Dendritic cell treated with granulocyte-macrophage colony-stimulating factor and Interleukin-4, amounts not matched to agents 40 ng/mL and 50 ng/mL, for 4 days (primary cell): ENCODE measurements at regions of chr17 and their contacts with region 1.

Region 1: DNA sequence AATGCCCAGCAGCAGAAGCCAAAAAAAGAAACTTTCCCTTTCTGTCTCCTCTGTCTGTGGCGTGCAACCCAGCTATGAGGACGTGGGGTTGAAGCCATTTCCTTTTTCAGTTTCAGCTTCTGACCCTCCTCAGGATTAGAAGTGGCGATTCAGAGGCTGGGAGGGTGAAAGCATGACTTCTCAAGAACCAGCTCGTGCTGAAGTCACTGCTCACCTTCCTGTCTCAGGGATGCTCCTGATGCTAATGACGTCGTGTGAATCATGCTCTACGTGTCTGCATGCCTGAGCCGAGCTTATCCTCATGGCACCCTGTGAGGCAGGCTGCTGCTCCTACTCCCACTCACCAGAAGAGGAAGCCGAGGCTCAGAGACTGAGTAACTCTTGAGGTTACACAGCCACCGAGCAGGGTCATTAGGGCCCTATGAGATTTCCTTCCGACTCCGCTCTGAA is 5.7 kb upstream of the LPO start:
- H3K4me3 Mint-ChIP-seq: peak overlapping the region; percentile 53
- H3K27ac Mint-ChIP-seq: peak overlapping the region; percentile 85
- H3K4me1 Mint-ChIP-seq: peaks cover 47% of the 10 kb centered on the region
- H3K27me3 Mint-ChIP-seq: peaks cover 39% of the 10 kb centered on the region

Region 2: GRCh38 chr17:58267347-58268324 is 34.9 kb after region 1 on chr17:
- intact Hi-C with region 1: loop called (anchors 5 kb)
- H3K4me3 Mint-ChIP-seq: no peak overlapping the region
- H3K27ac Mint-ChIP-seq: peak overlapping the region; percentile 14
- H3K4me1 Mint-ChIP-seq: peaks cover 61% of the 10 kb centered on the region
- H3K27me3 Mint-ChIP-seq: peaks cover 28% of the 10 kb centered on the region